ENCODE measurements at regions of chr4 and their contacts with region 1.

Region 1: GRCh38 chr4:83074086-83074704 is 39.2 kb downstream of the COPS4 start:
- DNase-seq: peak; percentile 49
- H3K4me3 Mint-ChIP-seq: peak overlapping the region; percentile 16
- H3K27ac Mint-ChIP-seq: no peak overlapping the region
- H3K4me1 Mint-ChIP-seq: peaks cover 8% of the 10 kb centered on the region
- H3K27me3 Mint-ChIP-seq: no peaks in the 10 kb centered on the region

Region 2: GRCh38 chr4:83034630-83035494 is 39.3 kb before region 1 on chr4 and contains the start of gene COPS4:
- CTCF ChIA-PET with region 1: interaction called, 12 read pairs
- POLR2A ChIA-PET with region 1: interaction called, 4 read pairs
- intact Hi-C with region 1: loop called (anchors 2 kb)
- DNase-seq: peak; percentile 97
- H3K4me3 Mint-ChIP-seq: peak within 1 kb of the TSS; percentile 85
- H3K27ac Mint-ChIP-seq: peak within 1 kb of the TSS; percentile 98
- H3K4me1 Mint-ChIP-seq: peaks cover 28% of the 10 kb centered on the region
- H3K27me3 Mint-ChIP-seq: no peaks in the 10 kb centered on the region
- total RNA-seq, gene COPS4: 38.5 to 40.6 TPM

Region 3: DNA sequence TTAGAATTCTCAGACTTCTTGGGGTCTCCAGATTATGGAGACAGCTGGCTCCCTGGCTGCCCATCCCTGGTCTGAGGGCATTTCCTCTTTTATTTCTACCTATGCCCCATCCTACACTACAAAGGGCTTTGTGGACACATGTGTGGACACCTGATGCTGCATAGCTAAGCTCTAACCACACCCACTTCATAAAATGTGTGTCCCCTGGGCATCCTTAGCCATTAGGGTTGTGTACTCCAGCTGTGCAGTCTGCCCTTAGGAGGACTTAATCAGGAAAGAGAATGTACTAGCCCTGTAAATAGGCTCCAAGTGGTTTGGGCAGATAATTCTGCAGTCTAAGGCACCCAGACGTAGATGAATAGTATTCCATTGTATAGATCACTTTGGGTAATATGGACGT is 163.4 kb after region 1 on chr4:
- CTCF ChIA-PET with region 1: interaction called, 12 read pairs
- POLR2A ChIA-PET with region 1: no interaction called
- intact Hi-C with region 1: loop called (anchors 1 kb)
- DNase-seq: no peak
- H3K4me3 Mint-ChIP-seq: no peak overlapping the region
- H3K27ac Mint-ChIP-seq: no peak overlapping the region
- H3K4me1 Mint-ChIP-seq: peaks cover 36% of the 10 kb centered on the region
- H3K27me3 Mint-ChIP-seq: peaks cover 41% of the 10 kb centered on the region

Region 4: DNA sequence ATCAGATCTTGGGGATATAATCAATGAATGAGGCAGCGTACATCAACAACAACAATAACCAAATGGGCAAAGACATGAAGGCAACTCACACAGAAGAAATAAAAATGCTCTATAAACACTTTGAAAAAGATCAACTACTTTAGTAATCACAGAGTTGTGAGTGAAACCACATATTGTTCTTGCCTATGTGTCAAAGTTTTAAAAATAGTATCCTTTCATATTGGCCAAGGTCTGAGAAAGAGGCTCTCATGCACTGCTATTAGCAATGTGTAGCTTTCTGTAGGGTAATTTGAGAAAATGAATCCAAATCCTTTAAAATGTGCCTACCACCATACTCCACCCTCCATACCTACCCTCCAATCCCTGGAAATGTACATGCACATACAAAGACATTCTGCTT is 185.4 kb after region 1 on chr4:
- CTCF ChIA-PET with region 1: interaction called, 15 read pairs
- POLR2A ChIA-PET with region 1: no interaction called
- intact Hi-C with region 1: loop called (anchors 1 kb)
- DNase-seq: no peak
- H3K4me3 Mint-ChIP-seq: no peak overlapping the region
- H3K27ac Mint-ChIP-seq: no peak overlapping the region
- H3K4me1 Mint-ChIP-seq: no peaks in the 10 kb centered on the region
- H3K27me3 Mint-ChIP-seq: no peaks in the 10 kb centered on the region

Region 5: DNA sequence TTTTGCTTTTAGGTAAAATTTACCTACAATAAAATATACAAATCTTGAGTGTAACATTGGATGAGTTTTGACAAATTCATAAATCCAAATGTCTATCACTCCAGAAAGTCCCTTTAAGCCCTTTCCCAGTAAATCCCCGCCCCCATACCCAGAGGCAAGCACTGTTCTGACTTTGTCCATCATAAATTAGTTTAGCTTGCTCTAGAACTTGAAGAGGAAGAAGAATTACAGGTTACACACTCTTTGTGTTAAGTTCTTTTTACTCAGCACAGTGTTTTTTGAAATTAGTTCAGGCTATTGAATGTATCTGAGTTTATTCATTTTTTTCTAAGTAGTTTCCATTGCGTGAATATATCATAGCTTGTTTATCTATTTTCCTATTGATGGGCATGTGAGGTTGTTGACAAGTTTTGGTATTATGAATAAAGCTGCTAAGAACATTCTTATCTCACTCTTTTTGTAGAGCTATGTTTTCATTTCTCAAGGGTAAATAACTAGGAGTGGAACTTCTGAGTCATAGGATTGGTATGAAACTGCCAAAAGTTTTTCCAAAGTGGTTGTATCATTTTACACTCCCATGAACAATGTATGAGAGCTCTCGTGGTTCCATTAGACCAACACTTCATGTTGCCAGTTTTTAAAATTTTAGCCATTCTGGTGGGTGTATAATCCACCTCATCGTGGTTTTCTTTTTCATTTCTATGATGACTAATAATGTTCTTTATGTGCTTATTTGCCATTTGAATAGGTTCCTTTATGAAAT is 282.9 kb after region 1 on chr4:
- CTCF ChIA-PET with region 1: no interaction called
- POLR2A ChIA-PET with region 1: no interaction called
- intact Hi-C with region 1: loop called (anchors 2 kb)
- DNase-seq: peak; percentile 65
- H3K4me3 Mint-ChIP-seq: peak overlapping the region; percentile 41
- H3K27ac Mint-ChIP-seq: peak overlapping the region; percentile 86
- H3K4me1 Mint-ChIP-seq: peaks cover 17% of the 10 kb centered on the region
- H3K27me3 Mint-ChIP-seq: no peaks in the 10 kb centered on the region